Right cardiac atrium (tissue), 5 donors: ENCODE measurements at regions of chr3 and their contacts with region 1.

Region 1: GRCh38 chr3:120245386-120245785 is 39.6 kb downstream of the GPR156 start:
- DNase-seq: no peak
- ATAC-seq: no peak
- H3K4me3 ChIP-seq: no peak overlapping the region
- H3K27ac ChIP-seq: no peak overlapping the region
- H3K4me1 ChIP-seq: no peaks in the 10 kb centered on the region
- H3K27me3 ChIP-seq: no peaks in the 10 kb centered on the region

Region 2: DNA sequence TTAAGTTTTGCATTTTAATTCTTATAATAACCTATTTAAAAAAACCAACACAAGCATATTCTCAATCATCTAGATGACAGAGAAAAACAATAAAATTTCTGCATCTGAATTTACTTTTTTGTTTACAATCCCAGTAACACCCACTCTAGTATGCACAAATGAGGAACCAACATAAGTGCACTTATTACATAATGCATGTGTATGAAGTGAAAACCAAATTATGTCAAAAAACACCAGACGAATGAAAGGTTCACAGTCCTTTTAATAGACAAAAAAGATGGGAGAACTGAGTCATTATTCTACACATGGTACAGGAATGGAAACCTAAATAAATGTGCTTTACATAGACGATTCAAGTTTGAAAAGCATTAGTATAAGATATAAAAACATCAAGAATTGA is 371.7 kb before region 1 on chr3:
- intact Hi-C with region 1: no loop called
- DNase-seq: no peak
- ATAC-seq: no peak
- H3K4me3 ChIP-seq: no peak overlapping the region
- H3K27ac ChIP-seq: no peak overlapping the region
- H3K4me1 ChIP-seq: no peaks in the 10 kb centered on the region
- H3K27me3 ChIP-seq: no peaks in the 10 kb centered on the region

Region 3: GRCh38 chr3:119990888-119991287 is 254.5 kb before region 1 on chr3:
- intact Hi-C with region 1: no loop called
- DNase-seq: no peak
- ATAC-seq: no peak
- H3K4me3 ChIP-seq: no peak overlapping the region
- H3K27ac ChIP-seq: no peak overlapping the region
- H3K4me1 ChIP-seq: no peaks in the 10 kb centered on the region
- H3K27me3 ChIP-seq: no peaks in the 10 kb centered on the region

Region 4: GRCh38 chr3:120369000-120369399 is 123.6 kb after region 1 on chr3:
- intact Hi-C with region 1: no loop called
- DNase-seq: no peak
- ATAC-seq: no peak
- H3K4me3 ChIP-seq: no peak overlapping the region
- H3K27ac ChIP-seq: no peak overlapping the region
- H3K4me1 ChIP-seq: no peaks in the 10 kb centered on the region
- H3K27me3 ChIP-seq: no peaks in the 10 kb centered on the region

Region 5: DNA sequence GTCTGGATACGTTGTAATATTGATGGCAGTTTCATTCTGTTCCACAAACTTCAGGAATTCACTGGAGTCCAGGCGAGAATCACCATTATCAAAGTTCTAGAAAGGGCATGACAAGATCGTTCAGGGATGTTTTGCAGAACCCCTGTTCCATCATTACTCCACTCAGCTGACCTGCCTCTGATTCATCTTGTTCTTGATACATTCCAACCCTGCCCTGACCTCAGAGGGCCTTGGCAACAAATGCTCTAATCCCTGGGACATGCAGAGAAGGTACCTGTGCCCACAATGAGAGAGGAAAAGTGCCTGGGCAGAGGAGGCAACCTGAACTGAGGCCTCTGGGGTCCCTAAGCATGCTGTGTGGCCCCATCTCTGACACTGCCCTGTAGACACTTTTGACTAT is 159.5 kb after region 1 on chr3:
- intact Hi-C with region 1: loop called in 3 of 4 experiments (anchors 10 kb)
- DNase-seq: no peak
- ATAC-seq: peak in 1 of 2 donors; percentile 14
- H3K4me3 ChIP-seq: no peak overlapping the region
- H3K27ac ChIP-seq: peak overlapping the region; percentile 2
- H3K4me1 ChIP-seq: no peaks in the 10 kb centered on the region
- H3K27me3 ChIP-seq: no peaks in the 10 kb centered on the region

Region 6: DNA sequence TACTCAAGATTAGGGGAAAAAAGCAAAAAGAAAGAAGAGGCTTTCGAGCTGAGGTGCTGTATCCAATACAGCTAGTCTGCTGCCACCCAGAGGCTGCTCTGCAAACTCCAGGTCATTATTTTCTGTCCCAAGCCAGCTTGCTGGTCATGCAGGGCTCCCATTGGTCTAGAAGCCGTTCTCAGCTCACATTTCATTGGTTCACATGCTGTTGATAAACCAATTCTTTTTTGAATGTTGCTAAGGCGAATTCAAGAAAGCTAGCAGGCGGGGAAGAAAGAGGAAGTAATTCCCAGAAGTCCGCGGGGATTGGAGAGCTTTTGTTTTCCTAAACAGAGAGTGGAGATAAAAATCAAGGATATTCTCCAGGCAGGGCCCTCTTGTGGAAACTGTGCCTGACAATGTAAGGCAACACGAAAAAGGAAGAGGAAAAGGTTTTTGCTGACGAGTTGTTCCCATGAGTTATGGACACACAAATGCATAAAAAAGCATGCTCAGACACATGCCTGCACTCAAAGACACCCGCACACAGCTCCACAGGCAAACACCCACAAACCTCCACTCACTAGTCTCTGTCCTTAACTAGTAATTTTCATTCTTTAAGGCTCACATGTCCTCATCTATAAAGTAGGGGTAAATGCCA is 172.0 kb after region 1 on chr3:
- intact Hi-C with region 1: loop called in 2 of 4 experiments (anchors 10 kb)
- DNase-seq: peak; percentile 88 to 94 (median 94)
- ATAC-seq: peak; percentile 66 to 81
- H3K4me3 ChIP-seq: no peak overlapping the region
- H3K27ac ChIP-seq: peak overlapping the region; percentile 49
- H3K4me1 ChIP-seq: peaks cover 17% of the 10 kb centered on the region
- H3K27me3 ChIP-seq: no peaks in the 10 kb centered on the region

Region 7: DNA sequence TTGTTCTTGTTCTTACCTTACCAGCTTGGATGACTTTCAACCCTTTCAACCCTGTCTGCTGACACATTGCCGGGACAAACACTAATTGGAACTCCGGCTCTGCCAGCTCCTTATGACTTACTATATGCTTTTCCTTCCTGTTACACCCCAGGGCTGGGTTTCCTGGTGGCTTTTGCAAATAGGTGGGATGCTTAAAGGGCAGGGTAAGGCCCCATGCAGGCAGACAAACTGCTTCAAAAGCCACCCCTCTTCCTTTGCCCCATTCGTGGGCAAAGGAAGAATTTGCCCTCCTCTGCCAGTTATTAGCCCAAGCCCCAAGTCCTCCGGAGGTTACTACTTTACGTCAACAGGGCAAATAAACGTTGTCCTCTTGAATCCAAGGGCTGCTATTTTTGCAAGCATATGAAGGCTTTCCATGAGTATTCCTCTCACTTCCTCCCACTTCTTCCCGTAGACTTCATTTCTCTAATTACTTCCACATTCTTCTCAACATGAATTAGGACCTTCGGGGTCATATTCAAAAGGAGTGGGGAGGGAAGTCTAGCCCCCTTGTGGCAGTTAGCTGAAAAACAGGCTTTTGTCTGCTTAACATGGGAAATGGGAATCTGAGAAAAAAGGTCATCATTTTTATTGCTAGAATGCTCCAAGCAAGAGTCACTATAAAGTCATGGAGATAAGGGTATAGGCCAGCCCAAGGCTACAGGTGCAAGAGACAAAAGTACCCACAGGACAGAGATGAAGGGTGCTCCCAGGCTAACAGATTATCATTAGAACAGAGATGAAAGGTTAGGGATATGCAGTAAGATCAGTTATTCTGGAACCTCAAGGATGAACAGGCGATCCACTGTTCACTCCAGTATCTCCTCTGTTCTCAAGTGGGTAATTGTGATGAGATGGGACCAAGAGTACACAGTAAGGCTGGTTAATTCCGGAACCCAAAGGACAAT is 261.7 kb after region 1 on chr3:
- intact Hi-C with region 1: loop called in 1 of 4 experiments (anchors 10 kb)
- DNase-seq: no peak
- ATAC-seq: peak; percentile 71 to 73
- H3K4me3 ChIP-seq: no peak overlapping the region
- H3K27ac ChIP-seq: no peak overlapping the region
- H3K4me1 ChIP-seq: peaks cover 10% of the 10 kb centered on the region
- H3K27me3 ChIP-seq: no peaks in the 10 kb centered on the region

Region 8: GRCh38 chr3:120661118-120661935 is 415.9 kb after region 1 on chr3:
- intact Hi-C with region 1: no loop called
- DNase-seq: no peak
- ATAC-seq: no peak
- H3K4me3 ChIP-seq: no peak overlapping the region
- H3K27ac ChIP-seq: no peak overlapping the region
- H3K4me1 ChIP-seq: no peaks in the 10 kb centered on the region
- H3K27me3 ChIP-seq: no peaks in the 10 kb centered on the region

Region 9: DNA sequence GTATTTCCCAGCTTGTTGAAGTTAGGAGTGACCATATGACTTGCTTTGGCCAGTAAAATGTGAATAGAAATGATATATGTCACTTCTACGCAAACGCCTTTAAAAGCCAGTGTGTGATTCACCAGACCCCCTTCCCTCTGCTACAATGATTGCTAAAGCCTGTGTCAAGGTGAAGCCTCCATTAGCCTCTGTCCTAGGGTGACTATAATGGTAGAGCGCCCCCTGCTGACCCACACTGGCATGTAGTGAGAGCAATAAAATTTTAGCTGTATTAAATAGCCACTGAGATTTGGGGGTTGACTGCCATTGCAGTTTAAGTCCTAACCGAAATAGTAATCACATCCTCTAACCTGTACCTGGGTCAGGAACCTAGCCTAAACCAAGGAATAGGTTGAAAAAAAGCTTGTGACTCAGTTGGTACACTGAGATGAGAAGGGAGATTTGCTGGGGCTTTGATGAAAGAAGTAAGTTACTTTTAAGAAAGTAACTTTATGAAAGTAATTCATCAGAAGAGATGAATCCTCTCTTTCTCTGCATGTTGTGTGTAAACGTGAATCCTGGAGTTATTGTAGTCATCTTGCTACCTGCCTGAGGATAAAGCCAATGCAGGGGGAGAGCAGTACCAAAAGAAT is 549.7 kb after region 1 on chr3:
- intact Hi-C with region 1: loop called in 2 of 4 experiments (anchors 5 kb)
- DNase-seq: peak; percentile 74 to 92 (median 85)
- ATAC-seq: peak; percentile 81 to 89
- H3K4me3 ChIP-seq: no peak overlapping the region
- H3K27ac ChIP-seq: no peak overlapping the region
- H3K4me1 ChIP-seq: no peaks in the 10 kb centered on the region
- H3K27me3 ChIP-seq: no peaks in the 10 kb centered on the region